Ovary (tissue), 10 donors: ENCODE measurements at regions of chr19 and their contacts with region 1.

Region 1: GRCh38 chr19:57249329-57249728 is 8.9 kb downstream of the ZNF805 start:
- DNase-seq: no peak
- H3K4me3 ChIP-seq: no peak overlapping the region
- H3K27ac ChIP-seq: no peak overlapping the region
- H3K4me1 ChIP-seq: no peaks in the 10 kb centered on the region
- H3K27me3 ChIP-seq: no peaks in the 10 kb centered on the region
- CTCF ChIP-seq: no peak
- EP300 ChIP-seq: no peak
- POLR2A ChIP-seq: no peak

Region 2: DNA sequence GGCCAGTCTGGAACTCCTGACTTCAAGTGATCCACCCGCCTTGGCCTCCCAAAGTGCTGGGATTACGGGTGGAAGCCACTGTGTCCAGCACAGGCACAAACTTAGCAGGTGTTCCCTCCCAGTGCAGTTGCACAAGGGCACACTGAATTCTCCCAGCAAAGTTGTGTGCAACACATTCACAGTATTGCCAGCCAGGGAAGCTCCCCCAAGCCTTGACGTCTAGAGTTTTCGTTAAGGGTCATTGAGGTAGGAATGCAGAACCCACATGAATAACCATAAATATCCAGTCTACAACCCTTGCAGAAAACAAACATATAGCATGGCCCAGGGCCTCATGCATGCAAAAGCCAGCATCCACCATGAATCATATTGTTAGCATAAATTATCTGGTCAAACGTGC is 21.8 kb before region 1 on chr19:
- intact Hi-C with region 1: loop called in 1 of 4 experiments (anchors 2 kb)
- DNase-seq: no peak
- H3K4me3 ChIP-seq: no peak overlapping the region
- H3K27ac ChIP-seq: no peak overlapping the region
- H3K4me1 ChIP-seq: no peaks in the 10 kb centered on the region
- H3K27me3 ChIP-seq: no peaks in the 10 kb centered on the region
- CTCF ChIP-seq: no peak
- EP300 ChIP-seq: no peak
- POLR2A ChIP-seq: no peak